Activated CD4-positive, alpha-beta T cell treated with anti-CD3 and anti-CD28 coated beads for 36 hours (primary cell): ENCODE measurements at regions of chr19 and their contacts with region 1.

Region 1: DNA sequence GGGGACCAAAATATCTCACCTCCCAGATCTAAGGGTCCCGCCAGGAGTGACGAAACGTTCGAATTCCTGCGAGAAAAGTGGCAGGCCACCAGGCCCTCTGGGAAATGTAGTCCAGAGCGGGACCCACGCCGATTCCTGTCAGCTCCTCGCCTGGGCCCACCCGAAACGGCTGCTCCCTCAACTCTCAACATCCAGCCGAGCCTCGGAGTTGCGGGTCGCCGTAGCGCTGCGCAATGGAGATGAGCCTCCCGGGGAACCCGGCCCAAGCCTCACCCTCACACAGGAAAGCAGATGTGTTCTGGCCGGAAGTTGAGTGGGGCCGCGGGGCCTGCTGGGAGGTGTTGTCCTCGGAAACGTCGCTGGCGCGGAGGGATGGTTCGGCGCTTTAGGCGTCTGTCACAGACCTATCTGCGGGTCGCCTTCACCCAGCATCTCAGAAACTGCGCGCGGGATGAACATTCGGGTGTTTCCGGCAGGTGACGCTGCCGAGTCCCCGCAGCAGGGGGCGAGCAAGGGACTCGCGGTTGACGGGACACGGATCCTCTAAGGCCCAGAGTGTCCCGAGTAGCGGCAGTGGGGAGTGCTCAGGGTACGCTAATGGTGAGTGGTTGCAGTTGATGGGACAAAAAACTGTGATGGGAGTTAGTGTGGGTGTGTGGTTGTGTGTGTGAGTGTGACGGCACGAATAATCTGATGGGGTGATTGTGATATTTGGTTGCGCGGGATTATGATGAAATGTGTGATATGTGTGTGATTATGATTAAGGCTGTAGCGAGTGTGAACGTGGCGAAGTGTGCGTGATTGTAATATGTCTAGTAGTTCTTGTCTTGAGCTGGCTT is at the starts of genes ZNF568 and ZNF829:
- DNase-seq: peak; percentile 97
- ATAC-seq: peak; percentile 98
- H3K4me3 Mint-ChIP-seq: peak within 1 kb of the TSS; percentile 88
- H3K27ac Mint-ChIP-seq: peak within 1 kb of the TSS; percentile 98
- H3K4me1 Mint-ChIP-seq: peaks cover 15% of the 10 kb centered on the region
- H3K27me3 Mint-ChIP-seq: no peaks in the 10 kb centered on the region
- total RNA-seq, gene ZNF568: 6.5 to 8.4 TPM
- total RNA-seq, gene ZNF829: 7.1 TPM

Region 2: DNA sequence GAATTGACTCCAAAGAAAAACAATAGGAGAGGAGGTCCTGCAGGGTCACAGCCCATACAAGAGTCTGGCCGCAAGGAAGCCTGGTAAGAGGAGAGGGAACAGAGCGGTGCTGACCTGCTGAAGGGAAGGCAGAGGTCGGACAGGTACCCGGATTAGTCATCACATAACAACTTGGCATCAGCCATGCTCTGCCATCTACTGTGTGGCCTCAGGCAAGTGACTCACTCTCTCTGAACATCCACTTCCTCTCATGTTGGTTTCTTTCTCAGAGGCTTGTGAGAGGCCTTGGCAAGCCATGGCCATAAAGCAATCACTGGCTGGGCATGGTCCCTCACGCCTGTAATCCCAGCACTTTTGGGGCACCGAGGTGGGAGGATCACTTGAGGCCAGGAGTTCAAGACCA is 783.7 kb before region 1 on chr19:
- CTCF ChIA-PET with region 1: no interaction called
- POLR2A ChIA-PET with region 1: no interaction called
- intact Hi-C with region 1: loop called in 1 of 2 experiments (anchors 5 kb)
- DNase-seq: peak; percentile 74
- ATAC-seq: peak; percentile 77
- H3K4me3 Mint-ChIP-seq: no peak overlapping the region
- H3K27ac Mint-ChIP-seq: peak overlapping the region; percentile 80
- H3K4me1 Mint-ChIP-seq: peaks cover 33% of the 10 kb centered on the region
- H3K27me3 Mint-ChIP-seq: no peaks in the 10 kb centered on the region

Region 3: DNA sequence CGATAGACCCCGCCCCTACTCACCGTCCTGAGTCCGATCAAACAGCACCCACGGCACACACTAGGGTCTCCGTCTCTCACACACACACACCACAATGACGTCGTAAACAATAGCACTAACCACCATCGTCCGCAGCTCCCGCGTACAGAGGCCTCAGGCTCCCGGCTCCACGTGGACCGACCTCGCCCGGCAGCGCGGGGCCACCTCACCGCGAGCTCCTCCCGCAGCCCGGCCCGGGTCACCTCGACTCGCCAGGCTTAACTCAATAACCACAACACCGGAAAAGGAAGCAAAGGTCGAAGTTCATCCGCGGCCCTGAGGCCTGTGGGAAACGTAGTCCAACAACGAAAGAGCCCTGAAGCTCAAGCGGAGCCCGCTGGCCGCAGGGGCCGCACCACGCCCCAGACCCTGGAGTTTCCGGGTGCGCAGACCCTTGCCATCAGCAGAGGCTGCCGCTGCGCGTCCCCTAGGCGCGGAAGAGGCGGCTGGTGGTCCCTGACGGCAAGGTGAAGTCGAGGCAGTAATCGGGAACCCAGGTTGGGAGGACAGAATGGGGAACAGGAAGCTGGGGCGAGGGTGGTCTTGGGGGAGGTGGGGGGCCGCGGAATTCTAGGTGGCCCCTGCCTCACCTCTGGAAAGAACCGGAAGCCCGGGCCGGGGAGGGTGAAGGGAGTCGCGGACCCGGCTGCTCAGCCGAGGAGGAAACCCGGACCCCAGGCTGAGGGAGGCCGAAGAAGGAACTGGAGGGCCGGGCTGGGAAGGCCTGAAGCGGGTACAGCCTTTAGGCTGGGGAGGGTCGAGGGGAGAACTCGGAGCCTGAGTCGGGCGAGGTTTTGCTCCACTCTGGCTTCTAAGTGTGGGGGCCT is 343.0 kb before region 1 on chr19 and contains the start of gene ZNF529:
- CTCF ChIA-PET with region 1: no interaction called
- POLR2A ChIA-PET with region 1: no interaction called
- intact Hi-C with region 1: loop called in 1 of 2 experiments (anchors 1 kb)
- DNase-seq: peak; percentile 91
- ATAC-seq: peak; percentile 90
- H3K4me3 Mint-ChIP-seq: peak within 1 kb of the TSS; percentile 83
- H3K27ac Mint-ChIP-seq: peak within 1 kb of the TSS; percentile 93
- H3K4me1 Mint-ChIP-seq: peaks cover 27% of the 10 kb centered on the region
- H3K27me3 Mint-ChIP-seq: no peaks in the 10 kb centered on the region
- total RNA-seq, gene ZNF529: 12.5 to 19.2 TPM

Region 4: DNA sequence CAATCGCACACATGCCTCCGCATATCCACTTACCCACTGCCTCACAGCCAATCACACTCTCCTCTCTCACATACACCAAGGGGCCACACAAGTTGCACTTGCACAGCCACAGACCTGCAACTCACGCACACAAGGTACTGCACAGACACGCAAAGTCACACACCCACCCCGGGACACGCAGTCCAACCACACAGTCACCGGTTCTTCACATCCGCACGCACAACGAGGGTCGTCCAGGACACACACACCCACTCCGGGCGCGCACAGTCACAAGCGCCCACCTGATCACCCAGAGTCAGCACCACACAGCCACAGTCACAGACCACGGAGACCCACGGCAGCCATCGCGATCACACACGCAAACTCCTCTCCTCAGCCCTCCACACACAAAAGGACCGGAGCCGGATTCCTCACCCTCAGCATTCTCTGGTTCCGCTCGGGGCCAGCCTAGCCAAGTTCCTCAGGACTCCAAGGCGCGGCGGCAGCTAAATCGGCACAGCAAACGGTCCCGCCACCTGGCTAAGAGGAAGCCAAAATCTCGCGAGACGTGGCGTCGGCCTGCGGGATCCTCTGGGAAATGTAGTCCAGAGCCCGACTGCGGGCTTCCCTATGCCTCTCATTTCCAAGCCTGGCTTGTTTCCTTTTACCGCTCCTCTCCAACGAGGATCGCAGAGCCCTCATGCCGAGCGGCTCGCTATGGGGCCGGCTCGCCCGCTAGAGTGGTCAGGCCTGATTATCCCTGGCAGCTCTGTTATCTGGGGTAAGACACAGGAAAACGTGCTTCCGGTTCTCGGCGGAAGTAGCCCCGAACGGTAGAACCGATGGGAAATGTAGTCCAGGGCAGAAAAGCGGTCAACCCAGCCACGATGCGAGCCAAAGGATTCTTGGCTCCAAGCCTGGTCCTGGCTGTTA is 143.6 kb before region 1 on chr19 and contains the start of gene ZNF850:
- CTCF ChIA-PET with region 1: no interaction called
- POLR2A ChIA-PET with region 1: no interaction called
- intact Hi-C with region 1: loop called (anchors 1 kb)
- DNase-seq: peak; percentile 97
- ATAC-seq: peak; percentile 92
- H3K4me3 Mint-ChIP-seq: peak within 1 kb of the TSS; percentile 99
- H3K27ac Mint-ChIP-seq: peak within 1 kb of the TSS; percentile 97
- H3K4me1 Mint-ChIP-seq: peaks cover 20% of the 10 kb centered on the region
- H3K27me3 Mint-ChIP-seq: no peaks in the 10 kb centered on the region
- total RNA-seq, gene ZNF850: 7.0 to 10.7 TPM

Region 5: GRCh38 chr19:36973021-36973843 is 57.0 kb after region 1 on chr19:
- CTCF ChIA-PET with region 1: no interaction called
- POLR2A ChIA-PET with region 1: no interaction called
- intact Hi-C with region 1: loop called in 1 of 2 experiments (anchors 1 kb)
- DNase-seq: peak; percentile 92
- ATAC-seq: peak; percentile 98
- H3K4me3 Mint-ChIP-seq: peak overlapping the region; percentile 81
- H3K27ac Mint-ChIP-seq: peak overlapping the region; percentile 92
- H3K4me1 Mint-ChIP-seq: peaks cover 6% of the 10 kb centered on the region
- H3K27me3 Mint-ChIP-seq: no peaks in the 10 kb centered on the region

Region 6: GRCh38 chr19:37466798-37467607 is 550.8 kb after region 1 on chr19 and contains the start of gene ZNF569:
- CTCF ChIA-PET with region 1: no interaction called
- POLR2A ChIA-PET with region 1: no interaction called
- intact Hi-C with region 1: loop called (anchors 1 to 2 kb)
- DNase-seq: peak; percentile 93
- ATAC-seq: peak; percentile 71
- H3K4me3 Mint-ChIP-seq: peak within 1 kb of the TSS; percentile 94
- H3K27ac Mint-ChIP-seq: peak within 1 kb of the TSS; percentile 95
- H3K4me1 Mint-ChIP-seq: peaks cover 31% of the 10 kb centered on the region
- H3K27me3 Mint-ChIP-seq: no peaks in the 10 kb centered on the region
- total RNA-seq, gene ZNF569: 7.4 to 9.1 TPM